Left ventricle myocardium inferior (tissue), 1 donor: ENCODE measurements at regions of chr6 and their contacts with region 1.

Region 1: DNA sequence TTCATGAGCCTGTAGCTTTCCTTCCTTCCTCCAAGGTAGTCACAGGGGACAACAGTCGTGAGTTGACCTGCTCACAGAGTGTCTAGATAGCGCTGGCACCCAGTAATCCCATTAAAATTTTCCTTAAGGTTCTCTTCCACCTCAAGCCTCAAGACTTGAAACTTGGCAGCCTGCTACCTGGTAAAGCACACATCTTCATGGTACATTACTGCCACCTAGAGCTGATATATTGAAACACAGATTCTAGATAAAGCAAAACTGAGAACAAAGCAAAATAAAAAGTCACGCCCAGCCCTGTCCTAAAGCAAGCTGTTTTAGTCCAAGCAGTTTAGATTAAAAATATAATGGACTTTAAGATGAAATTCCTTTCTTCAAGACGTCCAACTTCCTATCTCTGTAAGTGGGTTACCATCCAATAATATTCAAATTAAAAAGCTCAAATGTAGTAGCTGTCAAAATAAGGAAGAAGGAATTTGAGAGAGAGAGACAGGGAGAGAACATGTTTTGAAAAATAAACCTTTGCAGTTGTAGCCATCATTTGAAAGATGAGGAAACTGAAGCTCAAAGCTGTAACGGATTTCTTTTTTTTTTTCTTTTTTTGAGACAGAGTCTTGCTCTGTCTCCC is 50.7 kb upstream of the CD83 start:
- DNase-seq: no peak
- H3K4me3 ChIP-seq: no peak overlapping the region
- H3K27ac ChIP-seq: no peak overlapping the region
- H3K4me1 ChIP-seq: no peaks in the 10 kb centered on the region
- H3K27me3 ChIP-seq: peaks cover 14% of the 10 kb centered on the region
- CTCF ChIP-seq: peak; percentile 73

Region 2: DNA sequence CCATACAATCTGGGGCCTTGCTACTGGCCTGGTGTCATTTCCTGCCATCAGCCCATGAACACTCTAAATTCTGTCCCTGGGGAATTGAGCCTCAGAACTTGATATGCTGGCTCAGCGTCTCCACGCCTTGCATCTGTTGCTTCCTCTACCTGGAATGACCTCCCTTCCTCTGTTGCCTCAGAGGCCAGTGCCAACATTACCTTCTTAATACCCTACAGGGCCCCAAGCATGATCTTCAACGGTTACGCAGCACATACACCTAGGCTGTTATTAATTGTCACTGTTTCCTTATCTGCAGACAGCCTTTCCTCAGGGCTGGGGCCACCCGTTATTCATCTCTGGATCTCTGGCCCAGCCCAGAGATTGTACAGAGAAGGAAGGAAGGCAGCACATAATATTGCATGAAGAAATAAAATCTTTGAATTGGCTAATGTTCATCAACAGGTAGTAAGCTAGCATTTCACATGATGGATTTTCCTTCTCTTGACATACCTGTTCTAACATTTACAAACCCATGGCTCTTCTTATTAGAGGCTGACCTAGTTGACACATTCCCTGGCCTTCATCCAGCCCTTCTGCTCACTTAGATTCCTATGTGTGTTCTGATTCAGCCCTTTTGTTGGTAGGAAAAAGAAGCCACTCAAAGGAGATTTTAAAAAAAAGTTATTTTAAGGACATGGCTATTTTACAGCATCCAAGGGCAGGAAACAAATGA is 150.5 kb before region 1 on chr6:
- intact Hi-C with region 1: loop called (anchors 10 kb)
- DNase-seq: no peak
- H3K4me3 ChIP-seq: no peak overlapping the region
- H3K27ac ChIP-seq: no peak overlapping the region
- H3K4me1 ChIP-seq: no peaks in the 10 kb centered on the region
- H3K27me3 ChIP-seq: peaks cover 70% of the 10 kb centered on the region
- CTCF ChIP-seq: no peak

Region 3: GRCh38 chr6:14121936-14122344 is 55.0 kb after region 1 on chr6:
- intact Hi-C with region 1: no loop called
- DNase-seq: no peak
- H3K4me3 ChIP-seq: no peak overlapping the region
- H3K27ac ChIP-seq: no peak overlapping the region
- H3K4me1 ChIP-seq: peaks cover 32% of the 10 kb centered on the region
- H3K27me3 ChIP-seq: no peaks in the 10 kb centered on the region
- CTCF ChIP-seq: no peak

Region 4: GRCh38 chr6:14228571-14228970 is 161.7 kb after region 1 on chr6:
- intact Hi-C with region 1: no loop called
- DNase-seq: peak; percentile 19
- H3K4me3 ChIP-seq: no peak overlapping the region
- H3K27ac ChIP-seq: no peak overlapping the region
- H3K4me1 ChIP-seq: no peaks in the 10 kb centered on the region
- H3K27me3 ChIP-seq: no peaks in the 10 kb centered on the region
- CTCF ChIP-seq: no peak